Activated CD4-positive, alpha-beta memory T cell treated with anti-CD3 and anti-CD28 coated beads for 36 hours (primary cell): ENCODE measurements at regions of chr10 and their contacts with region 1.

Region 1: GRCh38 chr10:63866075-63866746 is 345.0 kb downstream of the REEP3 start:
- DNase-seq: peak; percentile 55
- H3K4me3 Mint-ChIP-seq: no peak overlapping the region
- H3K27ac Mint-ChIP-seq: no peak overlapping the region
- H3K4me1 Mint-ChIP-seq: peaks cover 6% of the 10 kb centered on the region
- H3K27me3 Mint-ChIP-seq: peaks cover 30% of the 10 kb centered on the region

Region 2: GRCh38 chr10:63633677-63634473 is 232.3 kb before region 1 on chr10:
- CTCF ChIA-PET with region 1: no interaction called
- POLR2A ChIA-PET with region 1: no interaction called
- intact Hi-C with region 1: no loop called
- DNase-seq: no peak
- H3K4me3 Mint-ChIP-seq: no peak overlapping the region
- H3K27ac Mint-ChIP-seq: no peak overlapping the region
- H3K4me1 Mint-ChIP-seq: peaks cover 14% of the 10 kb centered on the region
- H3K27me3 Mint-ChIP-seq: peaks cover 2% of the 10 kb centered on the region

Region 3: DNA sequence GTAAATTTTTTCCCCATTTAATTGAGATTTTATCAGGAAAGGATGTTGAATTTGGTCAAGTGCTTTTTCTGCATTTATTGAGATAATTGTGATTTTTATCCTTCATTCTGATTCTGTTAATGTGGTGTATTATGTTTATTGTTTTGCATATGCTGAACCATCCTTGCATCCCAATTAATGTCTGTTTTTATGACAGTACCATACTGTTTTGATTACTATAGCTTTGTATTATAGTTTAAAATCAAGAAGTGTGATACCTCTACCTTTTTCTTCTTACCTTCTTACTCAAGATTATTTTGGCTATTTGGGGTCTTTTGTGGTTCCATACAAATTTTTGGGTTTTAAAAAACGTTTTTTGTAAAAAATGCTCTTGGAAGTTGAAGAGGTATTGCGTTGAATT is 12.2 kb after region 1 on chr10:
- CTCF ChIA-PET with region 1: interaction called, 30 read pairs
- POLR2A ChIA-PET with region 1: interaction called, 3 read pairs
- intact Hi-C with region 1: no loop called
- DNase-seq: no peak
- H3K4me3 Mint-ChIP-seq: no peak overlapping the region
- H3K27ac Mint-ChIP-seq: no peak overlapping the region
- H3K4me1 Mint-ChIP-seq: no peaks in the 10 kb centered on the region
- H3K27me3 Mint-ChIP-seq: peaks cover 1% of the 10 kb centered on the region

Region 4: GRCh38 chr10:63887023-63887589 is 20.9 kb after region 1 on chr10:
- CTCF ChIA-PET with region 1: interaction called, 30 read pairs
- POLR2A ChIA-PET with region 1: no interaction called
- intact Hi-C with region 1: no loop called
- DNase-seq: no peak
- H3K4me3 Mint-ChIP-seq: no peak overlapping the region
- H3K27ac Mint-ChIP-seq: no peak overlapping the region
- H3K4me1 Mint-ChIP-seq: no peaks in the 10 kb centered on the region
- H3K27me3 Mint-ChIP-seq: peaks cover 2% of the 10 kb centered on the region

Region 5: DNA sequence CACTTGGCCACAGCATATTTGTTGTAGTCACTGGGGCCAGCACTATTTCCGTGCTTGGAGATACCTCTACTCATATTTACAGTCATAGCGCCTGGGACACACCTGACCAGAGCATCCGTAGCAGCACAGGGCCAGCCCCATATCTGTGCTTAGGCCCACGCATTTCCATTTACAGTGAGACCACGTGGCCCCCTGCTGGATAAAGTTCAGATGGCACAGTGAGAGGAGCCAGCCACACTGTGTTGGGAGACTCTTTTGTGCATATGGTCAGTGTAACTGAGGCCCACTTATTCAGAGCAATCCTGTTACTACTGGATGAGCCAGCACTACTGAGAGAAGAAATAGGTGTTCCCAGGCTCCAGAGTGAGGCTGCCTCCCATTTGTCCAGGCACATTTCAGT is 110.3 kb after region 1 on chr10:
- CTCF ChIA-PET with region 1: interaction called, 40 read pairs
- POLR2A ChIA-PET with region 1: no interaction called
- intact Hi-C with region 1: loop called (anchors 1 kb)
- DNase-seq: peak; percentile 54
- H3K4me3 Mint-ChIP-seq: no peak overlapping the region
- H3K27ac Mint-ChIP-seq: no peak overlapping the region
- H3K4me1 Mint-ChIP-seq: no peaks in the 10 kb centered on the region
- H3K27me3 Mint-ChIP-seq: no peaks in the 10 kb centered on the region